HCT116 (cell line): ENCODE measurements at regions of chr5 and their contacts with region 1.

Region 1: GRCh38 chr5:133944263-133945185 is 23.9 kb downstream of the C5orf15 start:
- DNase-seq: peak; percentile 46
- ATAC-seq: peak; percentile 93
- H3K4me3 ChIP-seq: no peak overlapping the region
- H3K27ac ChIP-seq: no peak overlapping the region
- H3K4me1 ChIP-seq: no peaks in the 10 kb centered on the region
- H3K27me3 ChIP-seq: no peaks in the 10 kb centered on the region
- CTCF ChIP-seq: peak; percentile 54 to 86 (median 84); a peak in 5 of 6 replicates
- POLR2A ChIP-seq: no peak
- RAD21 ChIP-seq: peak; percentile 85

Region 2: GRCh38 chr5:133423618-133424282 is 520.8 kb before region 1 on chr5:
- CTCF ChIA-PET with region 1: interaction called, 5 read pairs
- POLR2A ChIA-PET with region 1: no interaction called
- RAD21 ChIA-PET with region 1: no interaction called
- intact Hi-C with region 1: loop called (anchors 5 kb)
- DNase-seq: peak; percentile 16
- ATAC-seq: peak; percentile 94
- H3K4me3 ChIP-seq: no peak overlapping the region
- H3K27ac ChIP-seq: no peak overlapping the region
- H3K4me1 ChIP-seq: peaks cover 0 to 9% of the 10 kb centered on the region in 2 experiments; a peak in 1 of 4 replicates
- H3K27me3 ChIP-seq: 0 out of 2 replicates have a peak, but pooled peaks cover 5% of the 10 kb centered on the region
- CTCF ChIP-seq: peak; percentile 62 to 92 (median 87)
- POLR2A ChIP-seq: no peak
- RAD21 ChIP-seq: peak; percentile 68

Region 3: DNA sequence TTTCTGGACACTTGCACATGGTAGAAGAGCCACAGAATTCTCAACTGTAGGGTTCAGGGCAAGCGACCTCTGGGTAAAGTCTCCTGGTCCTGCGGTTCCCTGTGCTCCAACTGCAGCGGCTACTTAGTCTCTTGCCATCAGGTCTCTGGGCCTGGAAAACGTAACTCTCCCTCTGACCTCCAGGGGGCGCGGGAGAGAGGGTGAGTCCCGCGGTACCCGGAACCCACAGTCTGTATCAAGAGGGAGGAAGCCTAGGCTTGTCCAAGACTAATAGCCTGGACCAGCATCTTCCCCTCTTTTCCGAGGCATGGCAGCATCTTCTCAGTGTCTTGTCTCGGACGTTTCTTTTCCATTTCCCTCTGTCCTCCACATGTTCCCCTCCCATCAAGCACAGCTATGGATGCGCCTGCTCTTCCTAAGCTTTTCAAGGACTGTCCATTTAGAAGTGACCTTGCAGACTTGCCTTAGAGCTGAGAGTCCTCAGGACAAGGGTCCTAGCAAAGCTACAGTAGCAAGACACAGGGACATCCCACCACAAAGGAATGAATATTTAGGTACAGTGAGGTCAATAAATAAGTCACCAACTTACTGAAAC is 391.5 kb before region 1 on chr5:
- CTCF ChIA-PET with region 1: no interaction called
- POLR2A ChIA-PET with region 1: no interaction called
- RAD21 ChIA-PET with region 1: no interaction called
- intact Hi-C with region 1: loop called (anchors 1 kb)
- DNase-seq: peak; percentile 41
- ATAC-seq: peak; percentile 100
- H3K4me3 ChIP-seq: no peak overlapping the region
- H3K27ac ChIP-seq: no peak overlapping the region
- H3K4me1 ChIP-seq: no peaks in the 10 kb centered on the region
- H3K27me3 ChIP-seq: peaks cover 32% of the 10 kb centered on the region
- CTCF ChIP-seq: peak; percentile 57 to 91 (median 80); a peak in 5 of 6 replicates
- POLR2A ChIP-seq: no peak
- RAD21 ChIP-seq: peak; percentile 56; the same call in 1 of the 2 replicates

Region 4: GRCh38 chr5:133754575-133755169 is 189.9 kb before region 1 on chr5:
- CTCF ChIA-PET with region 1: interaction called, 5 read pairs
- POLR2A ChIA-PET with region 1: no interaction called
- RAD21 ChIA-PET with region 1: no interaction called
- intact Hi-C with region 1: loop called (anchors 2 kb)
- DNase-seq: peak; percentile 26
- ATAC-seq: peak; percentile 95
- H3K4me3 ChIP-seq: no peak overlapping the region
- H3K27ac ChIP-seq: no peak overlapping the region
- H3K4me1 ChIP-seq: no peaks in the 10 kb centered on the region
- H3K27me3 ChIP-seq: peaks cover 30% of the 10 kb centered on the region
- CTCF ChIP-seq: peak; percentile 21 to 79 (median 77); a peak in 5 of 6 replicates
- POLR2A ChIP-seq: no peak
- RAD21 ChIP-seq: peak; percentile 49